ENCODE measurements at regions of chr10 and their contacts with region 1.

Region 1: DNA sequence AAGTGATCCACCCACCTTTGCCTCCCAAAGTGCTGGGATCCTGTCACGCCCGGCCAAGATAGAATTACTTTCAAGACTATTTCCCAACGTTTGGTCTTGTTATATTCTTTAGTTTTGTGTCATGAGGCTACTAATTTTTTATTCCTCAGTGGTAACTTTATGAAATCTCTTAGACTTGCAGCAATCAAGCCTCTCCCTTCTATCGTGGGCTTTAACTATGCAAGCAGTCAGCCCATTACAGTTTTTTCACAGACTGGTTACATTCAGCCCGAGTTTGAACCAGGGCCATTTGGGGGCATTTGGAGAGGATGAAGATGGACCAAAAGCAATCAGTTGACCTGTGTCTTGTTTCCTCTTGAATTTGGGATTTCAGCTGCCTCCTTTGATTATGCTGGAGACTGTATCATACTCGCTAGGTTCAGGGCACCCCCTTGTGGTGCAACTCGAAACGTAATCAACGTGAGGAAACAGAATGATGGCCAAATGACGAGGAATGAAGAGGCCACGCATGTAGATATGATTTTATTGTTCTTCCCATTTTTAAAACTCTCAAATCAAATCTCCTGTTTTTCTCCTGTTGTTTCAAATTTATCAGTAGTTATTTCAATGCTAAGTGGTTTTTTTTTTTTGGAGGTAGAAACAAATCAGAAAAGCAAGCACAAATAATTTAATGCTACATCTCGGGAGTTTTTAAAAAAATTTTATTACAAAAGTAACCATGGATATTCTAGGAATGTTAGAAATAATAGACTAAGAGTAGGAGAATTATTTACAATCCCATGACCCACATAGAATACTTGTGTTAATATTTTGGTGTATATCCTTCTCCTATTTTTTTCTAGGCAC is 151.6 kb downstream of the KIAA1217 start:
- DNase-seq: peak; percentile 82
- H3K4me3 ChIP-seq: no peak overlapping the region
- H3K27ac ChIP-seq: no peak overlapping the region
- H3K4me1 ChIP-seq: peaks cover 6% of the 10 kb centered on the region; the same call in 1 of the 2 replicates
- H3K27me3 ChIP-seq: no peaks in the 10 kb centered on the region

Region 2: DNA sequence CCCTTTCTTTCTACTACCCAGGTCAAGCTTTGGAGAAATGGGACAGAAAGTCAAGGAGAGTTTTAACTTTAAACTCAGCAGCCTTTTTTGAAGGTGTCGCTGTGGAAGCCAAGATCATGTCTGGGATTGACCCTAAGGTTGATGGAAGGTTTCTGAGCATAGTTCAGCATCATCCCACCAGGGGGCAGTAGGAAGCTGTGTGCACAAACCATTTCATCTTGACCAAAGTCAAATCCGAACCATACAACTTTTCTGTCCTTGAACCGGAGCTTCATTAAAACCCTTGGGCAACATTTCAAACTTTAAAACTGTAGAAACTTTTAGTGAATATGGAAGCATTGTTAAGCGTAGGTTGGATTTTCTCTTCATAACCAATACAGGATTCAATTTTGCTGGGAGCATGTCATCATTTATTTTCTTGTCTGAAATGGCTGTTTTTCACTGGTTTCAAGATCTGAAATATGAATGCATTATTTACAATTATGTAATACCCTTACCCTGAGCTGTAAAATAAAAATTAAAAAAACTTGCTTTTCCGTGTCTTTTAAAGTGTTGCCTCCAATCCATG is 365.9 kb before region 1 on chr10:
- in situ Hi-C with region 1: loop called (anchors 5 kb)
- DNase-seq: peak; percentile 66
- H3K4me3 ChIP-seq: no peak overlapping the region
- H3K27ac ChIP-seq: no peak overlapping the region
- H3K4me1 ChIP-seq: no peaks in the 10 kb centered on the region
- H3K27me3 ChIP-seq: peaks cover 4% of the 10 kb centered on the region; the same call in 1 of the 2 replicates

Region 3: GRCh38 chr10:24168258-24169170 is 192.0 kb before region 1 on chr10:
- in situ Hi-C with region 1: no loop called
- DNase-seq: no peak
- H3K4me3 ChIP-seq: no peak overlapping the region
- H3K27ac ChIP-seq: no peak overlapping the region
- H3K4me1 ChIP-seq: no peaks in the 10 kb centered on the region
- H3K27me3 ChIP-seq: no peaks in the 10 kb centered on the region

Region 4: DNA sequence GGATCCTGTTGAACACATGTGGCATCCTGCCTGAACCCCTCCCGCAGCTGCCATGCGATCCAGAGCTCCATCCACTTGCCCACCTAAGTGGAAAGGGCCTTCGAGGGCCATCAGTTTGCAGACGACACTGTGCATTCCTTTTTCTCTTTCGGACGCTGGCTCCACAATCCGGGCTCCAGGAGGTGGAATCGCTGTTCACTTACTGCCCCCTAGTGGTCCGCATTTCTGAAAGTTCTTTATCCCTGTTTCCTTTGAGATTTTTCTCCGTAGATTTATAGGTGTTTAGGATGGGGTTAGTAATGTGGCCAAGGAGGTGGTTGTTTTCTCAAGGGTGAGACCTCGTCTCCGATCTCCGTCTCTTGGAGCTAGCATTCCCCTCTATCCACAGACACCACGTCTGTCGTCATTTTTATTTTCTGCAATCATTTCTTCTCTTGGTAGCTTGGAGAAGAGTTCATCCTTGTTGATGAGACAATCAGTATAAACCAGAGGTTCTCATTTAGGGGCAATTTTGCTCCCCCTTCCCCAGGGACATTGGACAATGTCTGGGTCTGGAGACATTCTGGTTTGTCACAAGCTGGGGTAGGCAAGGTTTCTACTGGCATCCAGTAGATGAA is 158.6 kb after region 1 on chr10:
- in situ Hi-C with region 1: loop called (anchors 10 kb)
- DNase-seq: peak; percentile 79
- H3K4me3 ChIP-seq: 0 out of 2 replicates have a peak overlapping the region, but pooled peaks have one; percentile 20
- H3K27ac ChIP-seq: no peak overlapping the region
- H3K4me1 ChIP-seq: 0 out of 2 replicates have a peak, but pooled peaks cover 6% of the 10 kb centered on the region
- H3K27me3 ChIP-seq: no peaks in the 10 kb centered on the region

Measured in GM23248 (cell line).